Endothelial cell of umbilical vein (primary cell): ENCODE measurements at regions of chr5 and their contacts with region 1.

Region 1: DNA sequence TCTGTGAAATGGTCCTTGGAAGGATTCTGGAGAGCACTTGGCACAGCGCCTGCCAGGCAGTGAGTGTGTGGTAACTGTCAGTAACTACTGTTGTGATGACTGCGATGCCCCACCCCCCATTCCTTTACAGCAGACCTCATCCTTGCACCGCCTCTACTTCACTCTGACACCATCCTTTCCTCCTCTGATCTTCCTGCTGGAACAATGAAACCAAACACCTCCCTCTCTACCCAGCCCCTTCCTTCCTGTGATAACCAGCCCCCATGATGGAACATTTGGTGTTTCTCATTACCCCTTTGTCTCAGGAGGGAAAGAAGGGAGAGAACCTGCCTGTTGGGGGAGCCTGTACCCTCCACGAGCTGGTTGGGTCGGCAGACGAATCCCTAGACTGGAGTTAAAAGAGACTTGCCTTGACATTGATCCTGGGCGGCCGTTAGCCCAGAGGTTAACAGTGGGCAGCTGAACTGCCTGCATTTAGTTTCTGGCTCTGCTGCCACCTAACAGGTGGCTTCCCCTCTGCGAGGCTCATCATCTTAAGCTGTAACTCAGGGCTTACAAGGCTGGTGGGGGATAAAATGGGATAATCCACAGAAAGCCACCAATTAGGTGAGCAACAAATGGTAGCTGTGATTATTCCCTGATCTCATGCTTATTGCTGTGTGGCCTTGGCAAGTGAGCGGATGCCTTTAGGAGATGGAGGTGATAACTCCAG is 34.2 kb upstream of the GRPEL2 start:
- DNase-seq: peak; percentile 78
- H3K4me3 ChIP-seq: no peak overlapping the region
- H3K27ac ChIP-seq: peak overlapping the region; percentile 77
- H3K4me1 ChIP-seq: peaks cover 23% of the 10 kb centered on the region
- H3K27me3 ChIP-seq: no peaks in the 10 kb centered on the region
- CTCF ChIP-seq: no peak
- POLR2A ChIP-seq: no peak

Region 2: GRCh38 chr5:149251546-149251945 is 59.6 kb before region 1 on chr5:
- CTCF ChIA-PET with region 1: no interaction called
- POLR2A ChIA-PET with region 1: no interaction called
- dilution Hi-C with region 1: no loop called
- intact Hi-C with region 1: no loop called
- DNase-seq: no peak
- H3K4me3 ChIP-seq: no peak overlapping the region
- H3K27ac ChIP-seq: no peak overlapping the region
- H3K4me1 ChIP-seq: no peaks in the 10 kb centered on the region
- H3K27me3 ChIP-seq: no peaks in the 10 kb centered on the region
- CTCF ChIP-seq: no peak
- POLR2A ChIP-seq: no peak

Region 3: GRCh38 chr5:149282022-149282984 is 28.8 kb before region 1 on chr5:
- CTCF ChIA-PET with region 1: no interaction called
- POLR2A ChIA-PET with region 1: no interaction called
- dilution Hi-C with region 1: no loop called
- intact Hi-C with region 1: no loop called
- DNase-seq: no peak
- H3K4me3 ChIP-seq: no peak overlapping the region
- H3K27ac ChIP-seq: no peak overlapping the region
- H3K4me1 ChIP-seq: peaks cover 4% of the 10 kb centered on the region
- H3K27me3 ChIP-seq: no peaks in the 10 kb centered on the region
- CTCF ChIP-seq: no peak
- POLR2A ChIP-seq: no peak

Region 4: DNA sequence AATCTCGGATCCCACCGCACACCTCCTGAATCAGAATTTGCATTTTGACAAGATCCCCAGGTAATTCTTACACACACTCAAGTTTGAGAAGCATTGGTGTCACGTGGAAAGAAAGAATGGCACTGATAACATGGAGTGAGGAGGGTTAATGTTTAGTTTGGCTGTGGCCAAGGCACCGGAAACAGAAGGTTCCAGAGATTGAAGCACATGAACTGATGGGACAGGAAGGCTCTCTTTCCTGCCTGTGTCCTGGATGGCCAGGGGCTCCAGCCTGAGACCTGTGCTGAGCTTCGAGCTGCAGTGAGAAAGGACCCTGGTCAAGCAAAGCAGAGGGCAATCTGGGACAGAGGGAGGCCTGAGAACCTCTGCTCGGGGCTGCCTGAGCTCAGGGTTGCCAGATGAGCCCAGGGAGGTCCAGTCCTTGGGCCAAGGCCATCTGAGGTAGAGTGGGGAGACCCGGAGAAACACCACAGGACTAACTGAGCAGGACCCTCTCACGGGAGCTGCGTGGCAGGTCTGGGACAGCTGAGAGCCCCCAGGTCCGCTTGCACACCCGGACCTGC is 12.2 kb before region 1 on chr5:
- CTCF ChIA-PET with region 1: interaction called, 26 read pairs
- POLR2A ChIA-PET with region 1: interaction called, 3 read pairs
- dilution Hi-C with region 1: no loop called
- intact Hi-C with region 1: loop called (anchors 1 kb)
- DNase-seq: peak; percentile 97
- H3K4me3 ChIP-seq: no peak overlapping the region
- H3K27ac ChIP-seq: peak overlapping the region; percentile 80
- H3K4me1 ChIP-seq: peaks cover 28% of the 10 kb centered on the region
- H3K27me3 ChIP-seq: no peaks in the 10 kb centered on the region
- CTCF ChIP-seq: no peak
- POLR2A ChIP-seq: peak; percentile 75